ENCODE measurements at regions of chr5 and their contacts with region 1.

Region 1: GRCh38 chr5:177086924-177087706 is 400 bp downstream of the FGFR4 start:
- DNase-seq: peak; percentile 88
- ATAC-seq: peak; percentile 76
- H3K4me3 ChIP-seq: peak overlapping the region; percentile 18 to 56 (median 48)
- H3K4me3 Mint-ChIP-seq: peak overlapping the region; percentile 49
- H3K27ac ChIP-seq: no peak overlapping the region
- H3K27ac Mint-ChIP-seq: no peak overlapping the region
- H3K4me1 ChIP-seq: peaks cover 12 to 22% of the 10 kb centered on the region in 2 donors
- H3K4me1 Mint-ChIP-seq: peaks cover 23% of the 10 kb centered on the region
- H3K27me3 ChIP-seq: peaks cover 0 to 21% (median 4%) of the 10 kb centered on the region in 4 experiments
- H3K27me3 Mint-ChIP-seq: peaks cover 8% of the 10 kb centered on the region
- CTCF ChIP-seq: peak; percentile 83

Region 2: DNA sequence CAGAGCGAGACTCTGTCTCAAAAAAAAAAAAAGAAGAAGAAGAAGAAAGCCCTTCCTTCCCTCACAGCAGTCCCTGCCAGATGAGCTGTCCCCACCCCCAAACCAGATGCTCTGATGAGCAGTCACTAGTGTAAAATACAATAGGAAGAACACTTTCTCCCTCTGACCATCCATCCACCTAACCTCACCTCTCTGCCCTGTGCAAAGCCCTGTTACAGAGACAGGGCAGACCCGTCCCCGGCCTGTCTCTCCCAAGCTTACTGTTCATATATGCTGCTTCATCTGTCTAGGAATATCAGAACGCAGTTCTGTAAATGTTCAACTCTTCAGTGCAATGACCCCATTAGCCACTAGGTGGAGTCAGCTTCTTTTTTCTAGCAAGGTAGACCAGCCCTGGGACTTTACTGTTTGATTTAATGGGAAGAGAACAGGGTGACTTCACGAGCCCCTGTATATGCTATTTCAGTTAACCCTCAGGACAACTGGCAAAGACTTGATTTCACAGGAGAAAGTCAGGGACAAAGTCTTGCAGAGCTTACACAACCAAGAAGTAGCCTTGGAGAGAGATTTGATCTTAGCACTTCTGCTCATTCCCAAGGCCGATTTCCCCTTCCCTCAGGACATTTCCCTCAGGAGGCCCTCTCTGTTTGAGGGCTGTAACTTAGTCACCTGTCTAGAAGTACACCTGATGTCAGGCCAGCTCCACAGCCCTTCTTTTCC is 15.3 kb before region 1 on chr5:
- CTCF ChIA-PET with region 1: interaction called, 77 read pairs
- POLR2A ChIA-PET with region 1: no interaction called
- intact Hi-C with region 1: loop called (anchors 1 kb)
- DNase-seq: peak; percentile 90
- ATAC-seq: peak; percentile 88
- H3K4me3 ChIP-seq: peak overlapping the region in 3 of 5 experiments; percentile 11 to 25 (median 23)
- H3K4me3 Mint-ChIP-seq: peak overlapping the region; percentile 64
- H3K27ac ChIP-seq: peak overlapping the region; percentile 11 to 79
- H3K27ac Mint-ChIP-seq: peak overlapping the region; percentile 66
- H3K4me1 ChIP-seq: peaks cover 25 to 33% of the 10 kb centered on the region in 2 donors
- H3K4me1 Mint-ChIP-seq: peaks cover 31% of the 10 kb centered on the region
- H3K27me3 ChIP-seq: no peaks in the 10 kb centered on the region
- H3K27me3 Mint-ChIP-seq: no peaks in the 10 kb centered on the region
- CTCF ChIP-seq: peak; percentile 95

Region 3: GRCh38 chr5:177317959-177318377 is 230.9 kb after region 1 on chr5:
- CTCF ChIA-PET with region 1: no interaction called
- POLR2A ChIA-PET with region 1: interaction called, 15 read pairs
- intact Hi-C with region 1: no loop called
- DNase-seq: peak; percentile 81
- ATAC-seq: peak; percentile 78
- H3K4me3 ChIP-seq: no peak overlapping the region
- H3K4me3 Mint-ChIP-seq: no peak overlapping the region
- H3K27ac ChIP-seq: no peak overlapping the region
- H3K27ac Mint-ChIP-seq: no peak overlapping the region
- H3K4me1 ChIP-seq: peaks cover 7 to 14% of the 10 kb centered on the region in 2 donors
- H3K4me1 Mint-ChIP-seq: peaks cover 25% of the 10 kb centered on the region
- H3K27me3 ChIP-seq: no peaks in the 10 kb centered on the region
- H3K27me3 Mint-ChIP-seq: no peaks in the 10 kb centered on the region
- CTCF ChIP-seq: peak; percentile 94